ENCODE measurements at regions of chr1 and their contacts with region 1.

Region 1: GRCh38 chr1:205485338-205486228 is 18.9 kb upstream of the CDK18 start:
- DNase-seq: no peak
- H3K4me3 ChIP-seq: no peak overlapping the region
- H3K27me3 ChIP-seq: peaks cover 31% of the 10 kb centered on the region
- CTCF ChIP-seq: peak; percentile 98

Region 2: DNA sequence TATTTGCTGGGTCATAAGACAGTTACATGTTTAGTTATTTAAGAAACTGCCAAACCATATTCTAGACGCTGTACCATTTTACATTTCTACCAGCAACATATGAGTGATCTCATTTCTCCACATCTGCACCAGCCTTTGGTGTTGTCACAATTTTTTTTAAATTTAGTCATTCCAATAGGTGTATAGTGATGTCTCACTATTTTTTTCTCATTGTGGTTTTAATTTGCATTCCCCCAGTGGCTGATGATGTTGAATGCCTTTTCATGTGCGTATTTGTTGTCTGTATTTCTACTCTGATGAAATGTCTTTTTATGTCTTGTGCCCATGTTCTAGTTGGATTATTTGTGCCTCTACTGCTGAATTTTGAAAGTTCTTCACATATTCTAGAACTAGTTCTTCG is 576.5 kb before region 1 on chr1:
- CTCF ChIA-PET with region 1: no interaction called
- POLR2A ChIA-PET with region 1: no interaction called
- DNase-seq: no peak
- H3K4me3 ChIP-seq: no peak overlapping the region
- H3K27me3 ChIP-seq: no peaks in the 10 kb centered on the region
- CTCF ChIP-seq: no peak

Region 3: DNA sequence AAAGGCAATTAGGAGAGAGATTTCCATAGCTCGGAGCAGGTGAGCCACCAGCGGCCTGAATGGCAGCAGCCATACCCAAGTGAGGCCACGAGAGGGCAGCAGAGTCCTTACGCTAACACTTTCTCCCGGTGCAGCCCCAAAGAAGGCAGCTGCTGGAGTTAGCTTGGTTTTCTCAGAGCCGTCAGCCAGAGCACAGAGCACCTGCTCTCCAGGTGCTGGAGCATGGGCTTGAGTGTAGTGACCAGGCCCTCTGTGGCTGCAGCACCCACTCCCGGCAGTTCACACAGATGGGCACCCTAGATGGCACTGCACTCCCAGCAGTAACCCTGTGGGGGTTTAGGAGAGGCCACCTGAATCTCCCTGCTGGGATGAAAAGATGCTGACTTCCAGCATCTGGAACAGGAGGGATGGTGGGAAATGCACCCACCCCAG is 212.0 kb before region 1 on chr1:
- CTCF ChIA-PET with region 1: interaction called, 11 read pairs
- POLR2A ChIA-PET with region 1: no interaction called
- DNase-seq: no peak
- H3K4me3 ChIP-seq: no peak overlapping the region
- H3K27me3 ChIP-seq: no peaks in the 10 kb centered on the region
- CTCF ChIP-seq: peak; percentile 98

Region 4: DNA sequence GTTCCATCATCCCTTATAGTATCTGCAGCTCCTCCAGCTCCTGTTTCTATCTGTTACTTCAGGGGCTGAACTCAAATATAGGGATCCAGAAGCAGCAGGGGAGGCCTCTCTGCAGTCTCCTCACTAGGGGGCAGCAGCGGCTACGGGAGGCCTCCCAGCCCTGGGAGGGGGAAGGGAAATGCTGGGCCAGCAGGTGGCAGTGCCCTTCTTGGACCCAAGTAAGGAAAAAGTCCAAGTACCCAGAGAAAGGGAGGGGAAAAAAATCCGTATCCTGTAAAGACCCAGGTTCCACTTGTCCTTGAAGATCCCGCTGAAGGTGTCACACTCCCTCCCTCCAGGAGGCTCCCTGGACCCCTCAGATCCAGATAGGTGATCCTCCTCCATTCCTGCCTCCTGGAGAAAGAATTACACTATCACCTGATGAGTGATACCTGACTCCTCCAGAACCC is 149.9 kb before region 1 on chr1:
- CTCF ChIA-PET with region 1: interaction called, 25 read pairs
- POLR2A ChIA-PET with region 1: no interaction called
- DNase-seq: no peak
- H3K4me3 ChIP-seq: no peak overlapping the region
- H3K27me3 ChIP-seq: peaks cover 28% of the 10 kb centered on the region
- CTCF ChIP-seq: peak; percentile 99

Region 5: DNA sequence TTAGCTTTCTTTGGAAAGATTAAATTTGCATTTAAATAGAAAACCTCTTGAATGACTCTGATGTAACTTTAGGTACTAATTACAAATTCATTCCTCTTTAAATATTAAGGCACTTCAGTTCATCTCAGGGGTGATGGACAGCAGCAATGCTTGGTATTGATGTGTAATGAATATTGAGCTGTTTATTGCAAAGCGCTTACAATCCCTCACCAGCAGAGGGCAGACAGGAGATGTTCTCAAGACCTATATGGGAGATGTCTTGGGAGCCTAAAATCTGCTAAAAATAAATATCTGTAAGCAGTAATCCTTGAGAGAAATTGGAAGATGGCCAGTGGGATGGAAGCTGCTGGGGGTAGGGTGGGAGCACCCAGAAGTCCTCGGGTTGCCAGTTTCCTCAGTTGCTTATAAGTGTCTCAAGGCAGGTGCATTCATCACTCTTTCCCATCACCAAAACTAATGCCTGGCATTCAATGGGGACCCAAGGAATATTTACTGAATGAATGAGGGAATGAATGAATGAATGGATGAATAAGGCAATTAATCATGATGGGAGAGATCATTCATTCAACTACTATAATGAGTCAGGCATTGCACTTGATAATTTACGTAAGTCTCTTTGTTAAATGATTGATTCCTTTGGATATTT is 131.2 kb before region 1 on chr1:
- CTCF ChIA-PET with region 1: interaction called, 119 read pairs
- POLR2A ChIA-PET with region 1: no interaction called
- DNase-seq: no peak
- H3K4me3 ChIP-seq: no peak overlapping the region
- H3K27me3 ChIP-seq: peaks cover 29% of the 10 kb centered on the region
- CTCF ChIP-seq: peak; percentile 88

Region 6: GRCh38 chr1:205430696-205431305 is 54.8 kb before region 1 on chr1:
- CTCF ChIA-PET with region 1: interaction called, 17 read pairs
- POLR2A ChIA-PET with region 1: no interaction called
- DNase-seq: no peak
- H3K4me3 ChIP-seq: peak overlapping the region; percentile 32
- H3K27me3 ChIP-seq: peaks cover 30% of the 10 kb centered on the region
- CTCF ChIP-seq: peak; percentile 84

Region 7: DNA sequence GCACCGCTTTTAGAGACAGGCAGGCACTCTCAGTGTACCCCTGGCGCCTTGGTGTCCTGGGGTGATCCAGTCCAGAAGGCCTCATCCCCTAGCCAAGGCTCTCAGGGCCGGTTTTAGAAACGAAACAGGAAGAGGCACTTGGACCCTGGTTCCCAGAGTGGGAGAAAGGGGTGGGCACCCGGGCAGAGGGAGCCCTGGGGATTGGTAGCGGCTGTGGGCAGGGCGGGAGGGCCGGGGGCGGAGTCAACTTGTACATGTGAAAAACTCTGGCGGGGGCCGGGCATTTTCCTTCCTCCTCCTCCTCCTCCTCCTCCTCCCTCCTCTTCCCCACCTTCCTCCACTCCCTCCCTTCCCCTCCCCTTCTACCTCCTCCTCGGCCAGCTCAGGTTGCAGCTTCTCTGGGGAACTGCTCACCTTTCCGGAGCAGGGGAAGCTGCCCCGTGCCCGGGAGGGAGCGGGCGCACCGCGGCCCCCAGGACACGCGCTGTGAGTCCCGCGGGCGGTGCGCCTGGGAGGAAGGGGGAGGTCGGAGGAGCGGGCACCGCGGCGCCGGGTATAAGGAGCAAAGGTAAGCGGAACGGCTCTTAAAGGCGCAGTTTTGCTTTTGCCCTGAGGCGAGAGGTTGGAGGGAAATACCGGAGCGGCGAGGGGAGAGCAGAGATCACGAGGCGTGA is 18.9 kb after region 1 on chr1 and contains the start of gene CDK18:
- CTCF ChIA-PET with region 1: interaction called, 819 read pairs
- POLR2A ChIA-PET with region 1: no interaction called
- DNase-seq: no peak
- H3K4me3 ChIP-seq: peak within 1 kb of the TSS; percentile 42
- H3K27me3 ChIP-seq: peaks cover 29% of the 10 kb centered on the region
- CTCF ChIP-seq: no peak
- polyA plus RNA-seq, gene CDK18: 0.45 and 0.83 TPM in 2 replicates

Region 8: GRCh38 chr1:205766038-205766437 is 280.5 kb after region 1 on chr1:
- CTCF ChIA-PET with region 1: no interaction called
- POLR2A ChIA-PET with region 1: no interaction called
- DNase-seq: no peak
- H3K4me3 ChIP-seq: no peak overlapping the region
- H3K27me3 ChIP-seq: no peaks in the 10 kb centered on the region
- CTCF ChIP-seq: no peak

Measured in BJ (cell line).